Cardiac septum (tissue), 1 donor: ENCODE measurements at regions of chr2 and their contacts with region 1.

Region 1: DNA sequence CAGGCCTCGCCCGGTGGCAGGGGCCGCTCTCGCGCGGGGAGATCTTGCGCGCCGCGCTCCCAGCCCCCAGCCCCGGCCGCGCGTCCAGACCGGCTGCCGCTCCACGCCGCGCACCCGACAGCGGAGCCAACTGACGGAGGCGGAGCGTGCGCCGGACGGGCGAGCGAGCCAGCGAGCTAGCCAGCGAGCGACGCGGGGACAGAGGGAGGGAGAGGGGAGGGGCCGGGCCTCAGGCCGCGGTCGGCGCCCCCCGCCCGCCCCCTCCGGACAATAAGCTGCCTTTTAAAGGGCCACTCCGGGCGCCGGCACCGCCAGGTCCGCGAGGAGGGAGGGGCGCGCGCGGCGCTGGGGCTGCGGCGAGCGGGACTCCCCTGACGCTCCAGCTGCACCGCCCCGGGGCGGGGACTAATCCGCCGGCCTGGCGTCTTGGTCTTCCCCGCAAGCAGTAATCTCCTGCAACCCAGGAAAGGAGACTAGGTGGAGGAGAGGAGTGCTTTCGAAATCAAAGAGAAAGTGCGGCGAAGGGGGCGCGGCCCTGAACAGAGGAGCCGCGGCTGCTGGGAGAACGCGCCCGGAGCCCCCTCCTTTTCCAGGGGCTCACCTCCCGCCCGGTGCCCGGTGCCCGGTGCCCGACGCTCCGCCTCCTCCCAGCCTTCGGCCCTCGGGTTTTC is at the start of gene BIN1:
- DNase-seq: peak; percentile 87
- total RNA-seq, gene BIN1: 14.0 TPM

Region 2: DNA sequence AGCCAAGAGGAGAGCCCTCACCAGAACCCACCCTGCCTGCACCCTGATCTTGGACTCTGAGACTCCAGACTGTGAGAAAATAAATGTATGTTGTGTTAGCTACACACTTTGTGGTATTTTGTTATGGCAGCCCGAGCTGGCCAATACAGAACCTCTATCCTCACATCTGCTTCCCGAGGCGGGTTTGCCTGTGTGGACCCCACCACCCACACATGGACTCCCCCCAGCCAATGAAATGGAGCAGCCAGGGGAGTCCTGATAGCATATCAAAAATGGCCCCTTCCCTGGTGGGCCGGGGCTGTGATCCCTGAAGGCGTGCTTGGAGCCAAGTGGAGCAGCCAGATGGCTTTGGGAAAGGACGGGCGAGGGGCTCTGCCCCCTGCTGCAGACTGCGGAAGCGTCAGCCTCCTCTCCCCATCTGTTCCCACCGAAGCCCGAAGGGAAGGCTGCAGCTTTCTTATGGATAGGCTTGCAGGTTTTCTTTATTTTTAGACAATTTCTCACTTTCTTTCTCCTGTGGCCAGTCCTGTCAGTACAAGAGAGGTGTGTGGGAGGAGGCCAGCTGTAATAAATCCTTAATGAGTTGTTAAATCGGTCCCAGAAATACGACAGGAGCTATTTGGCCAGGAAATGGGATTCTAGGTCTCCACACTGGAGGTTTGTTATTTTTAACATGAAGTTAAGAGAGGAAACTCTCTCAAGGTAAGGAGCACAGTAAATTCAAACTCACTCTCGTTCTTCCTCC is 173.9 kb before region 1 on chr2:
- intact Hi-C with region 1: no loop called
- DNase-seq: no peak

Region 3: GRCh38 chr2:127064642-127065250 is 42.3 kb before region 1 on chr2:
- intact Hi-C with region 1: loop called (anchors 5 kb)
- DNase-seq: peak; percentile 93

Region 4: DNA sequence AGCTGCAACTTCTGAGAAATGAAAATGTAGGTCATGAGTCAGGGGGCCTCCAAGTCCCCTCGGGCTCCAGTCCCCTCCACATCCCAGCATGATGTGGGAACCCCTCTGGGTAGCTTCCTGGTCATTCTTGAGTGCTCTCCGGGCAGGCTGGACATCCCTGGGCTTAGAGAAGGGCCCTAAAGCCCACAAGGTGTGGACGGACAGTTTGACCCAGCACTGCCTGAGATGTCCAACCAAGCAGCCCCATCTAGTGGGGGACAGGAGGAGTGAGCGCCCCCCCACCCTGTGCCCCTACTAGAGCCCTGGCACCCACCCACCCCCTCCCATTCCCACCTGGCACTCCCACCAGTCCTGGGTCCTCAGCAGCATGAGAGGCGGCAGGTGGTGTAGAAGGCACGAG is 67.0 kb after region 1 on chr2:
- intact Hi-C with region 1: no loop called
- DNase-seq: peak; percentile 60